Activated naive CD4-positive, alpha-beta T cell treated with anti-CD3 and anti-CD28 coated beads for 36 hours (primary cell): ENCODE measurements at regions of chr9 and their contacts with region 1.

Region 1: DNA sequence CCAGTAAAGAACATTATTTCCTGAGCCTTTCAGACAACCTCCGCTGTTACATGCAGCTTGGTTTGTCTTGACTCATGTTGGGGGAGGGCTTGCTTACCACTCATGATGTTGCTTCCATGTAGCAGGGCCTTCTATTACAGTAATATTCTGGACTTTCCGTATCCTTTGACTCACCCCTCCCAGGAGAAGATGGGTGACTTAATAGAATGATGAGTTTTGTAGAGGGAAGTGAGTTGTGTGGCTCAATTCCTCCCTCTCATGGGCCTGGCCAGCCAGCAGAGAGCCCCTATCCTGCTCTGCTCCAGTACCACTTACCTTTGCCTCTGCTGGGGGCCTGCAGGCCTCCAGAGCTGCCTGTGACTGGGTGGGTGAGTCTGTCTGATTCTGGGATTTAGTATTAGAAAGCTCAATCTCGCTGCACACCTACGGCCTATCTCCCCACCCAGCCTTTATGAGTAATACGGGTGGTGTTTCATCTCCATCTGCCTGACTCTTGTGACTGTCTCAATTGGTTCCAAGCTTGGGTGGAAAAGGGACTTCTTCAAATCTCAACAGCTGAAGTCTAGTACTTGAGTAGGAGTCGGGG is 52.6 kb upstream of the KLF9 start:
- DNase-seq: peak; percentile 73
- H3K4me3 Mint-ChIP-seq: peak overlapping the region; percentile 7
- H3K27ac Mint-ChIP-seq: peak overlapping the region; percentile 83
- H3K4me1 Mint-ChIP-seq: peaks cover 72% of the 10 kb centered on the region
- H3K27me3 Mint-ChIP-seq: no peaks in the 10 kb centered on the region

Region 2: GRCh38 chr9:69785757-69786156 is 681.3 kb before region 1 on chr9:
- CTCF ChIA-PET with region 1: no interaction called
- intact Hi-C with region 1: no loop called
- DNase-seq: no peak
- H3K4me3 Mint-ChIP-seq: no peak overlapping the region
- H3K27ac Mint-ChIP-seq: no peak overlapping the region
- H3K4me1 Mint-ChIP-seq: no peaks in the 10 kb centered on the region
- H3K27me3 Mint-ChIP-seq: peaks cover 2% of the 10 kb centered on the region

Region 3: DNA sequence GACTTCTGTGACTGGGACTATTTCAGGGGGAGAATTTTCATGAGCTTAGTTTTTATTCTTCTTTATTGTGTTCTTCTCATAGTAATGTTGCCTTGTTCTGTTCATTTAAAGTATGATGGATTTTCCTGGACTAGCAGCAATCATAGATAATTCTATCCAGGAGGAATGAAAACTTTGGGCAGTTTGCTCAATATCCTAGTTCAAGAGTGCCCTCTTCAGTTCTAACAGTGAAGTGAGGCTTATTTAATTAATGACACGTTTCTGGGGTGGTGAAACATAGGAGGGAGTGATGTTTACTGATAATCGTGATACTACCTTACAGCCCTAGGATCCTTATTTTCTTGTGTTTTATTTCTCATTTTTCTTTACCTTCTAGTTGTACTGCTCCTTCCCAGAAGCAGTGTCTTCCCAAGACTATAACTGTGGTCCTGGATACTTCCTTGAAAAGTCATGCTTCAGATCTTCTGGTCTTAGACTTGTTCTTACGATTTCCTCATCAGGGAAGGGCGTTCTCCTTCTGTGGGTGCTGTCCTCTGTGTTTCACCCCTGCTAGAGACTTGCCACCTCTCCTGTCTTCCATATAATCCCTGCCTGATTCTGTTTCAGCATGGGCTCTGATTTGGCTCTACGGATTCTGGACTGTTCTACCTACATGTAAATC is 589.1 kb before region 1 on chr9:
- CTCF ChIA-PET with region 1: no interaction called
- intact Hi-C with region 1: no loop called
- DNase-seq: no peak
- H3K4me3 Mint-ChIP-seq: no peak overlapping the region
- H3K27ac Mint-ChIP-seq: no peak overlapping the region
- H3K4me1 Mint-ChIP-seq: no peaks in the 10 kb centered on the region
- H3K27me3 Mint-ChIP-seq: peaks cover 4% of the 10 kb centered on the region

Region 4: GRCh38 chr9:70419546-70420266 is 47.4 kb before region 1 on chr9:
- CTCF ChIA-PET with region 1: interaction called, 7 read pairs
- intact Hi-C with region 1: loop called (anchors 1 kb)
- DNase-seq: peak; percentile 94
- H3K4me3 Mint-ChIP-seq: peak overlapping the region; percentile 96
- H3K27ac Mint-ChIP-seq: peak overlapping the region; percentile 100
- H3K4me1 Mint-ChIP-seq: peaks cover 47% of the 10 kb centered on the region
- H3K27me3 Mint-ChIP-seq: no peaks in the 10 kb centered on the region

Region 5: GRCh38 chr9:70438341-70438928 is 28.6 kb before region 1 on chr9:
- CTCF ChIA-PET with region 1: no interaction called
- intact Hi-C with region 1: loop called (anchors 1 kb)
- DNase-seq: peak; percentile 50
- H3K4me3 Mint-ChIP-seq: no peak overlapping the region
- H3K27ac Mint-ChIP-seq: no peak overlapping the region
- H3K4me1 Mint-ChIP-seq: peaks cover 16% of the 10 kb centered on the region
- H3K27me3 Mint-ChIP-seq: no peaks in the 10 kb centered on the region

Region 6: GRCh38 chr9:70484210-70485130 is 17.4 kb after region 1 on chr9:
- CTCF ChIA-PET with region 1: interaction called, 12 read pairs
- intact Hi-C with region 1: loop called (anchors 1 kb)
- DNase-seq: no peak
- H3K4me3 Mint-ChIP-seq: no peak overlapping the region
- H3K27ac Mint-ChIP-seq: no peak overlapping the region
- H3K4me1 Mint-ChIP-seq: peaks cover 17% of the 10 kb centered on the region
- H3K27me3 Mint-ChIP-seq: no peaks in the 10 kb centered on the region

Region 7: DNA sequence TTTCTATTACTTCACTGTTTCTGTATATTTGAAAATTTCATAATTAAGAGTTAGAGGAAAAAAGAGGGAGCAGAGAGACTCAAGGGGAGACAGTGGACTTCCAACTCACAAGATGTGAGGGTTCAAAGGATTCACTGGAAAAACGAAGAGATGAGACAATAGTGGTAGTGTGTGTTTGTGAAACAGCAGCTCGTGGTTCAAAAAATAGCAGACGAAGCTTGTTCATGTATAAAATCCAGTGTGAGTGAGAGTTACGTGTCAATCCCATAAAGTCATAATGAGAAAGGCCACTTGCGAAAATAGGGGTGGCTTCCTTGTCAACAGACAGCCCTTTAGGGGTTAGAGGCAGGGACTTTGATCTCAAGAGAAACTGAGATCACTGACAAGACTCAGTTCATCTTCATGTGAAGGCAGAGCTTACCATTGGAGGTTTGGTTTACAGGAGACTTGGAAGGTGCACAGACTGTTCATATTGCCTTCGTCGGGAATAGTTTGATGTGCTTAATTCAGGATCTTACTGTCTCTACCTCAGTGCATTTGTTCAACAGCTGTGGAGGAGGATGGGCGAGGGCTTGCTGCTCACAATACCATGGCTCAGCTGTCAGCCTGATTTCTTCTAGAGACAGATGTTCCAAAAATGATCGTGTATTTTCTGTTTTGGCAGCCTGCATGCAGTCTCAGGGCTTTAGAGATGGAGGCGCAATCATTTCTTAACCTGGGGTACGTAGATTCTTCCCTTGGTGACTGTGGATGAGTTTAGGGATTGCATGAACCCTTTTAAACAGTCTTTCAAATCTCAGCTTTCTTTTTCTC is 53.0 kb after region 1 on chr9:
- CTCF ChIA-PET with region 1: no interaction called
- intact Hi-C with region 1: loop called (anchors 1 kb)
- DNase-seq: peak; percentile 49
- H3K4me3 Mint-ChIP-seq: peak overlapping the region; percentile 53
- H3K27ac Mint-ChIP-seq: peak overlapping the region; percentile 82
- H3K4me1 Mint-ChIP-seq: peaks cover 32% of the 10 kb centered on the region
- H3K27me3 Mint-ChIP-seq: no peaks in the 10 kb centered on the region